Ascending aorta (tissue), 2 donors: ENCODE measurements at regions of chr1 and their contacts with region 1.

Region 1: GRCh38 chr1:184563308-184563707 is 176.5 kb downstream of the C1orf21 start:
- DNase-seq: no peak
- H3K4me3 ChIP-seq: no peak overlapping the region
- H3K27ac ChIP-seq: no peak overlapping the region
- H3K4me1 ChIP-seq: peaks cover 2 to 6% of the 10 kb centered on the region in 2 donors
- H3K27me3 ChIP-seq: no peaks in the 10 kb centered on the region
- CTCF ChIP-seq: peak; percentile 25 to 62 (median 33)

Region 2: DNA sequence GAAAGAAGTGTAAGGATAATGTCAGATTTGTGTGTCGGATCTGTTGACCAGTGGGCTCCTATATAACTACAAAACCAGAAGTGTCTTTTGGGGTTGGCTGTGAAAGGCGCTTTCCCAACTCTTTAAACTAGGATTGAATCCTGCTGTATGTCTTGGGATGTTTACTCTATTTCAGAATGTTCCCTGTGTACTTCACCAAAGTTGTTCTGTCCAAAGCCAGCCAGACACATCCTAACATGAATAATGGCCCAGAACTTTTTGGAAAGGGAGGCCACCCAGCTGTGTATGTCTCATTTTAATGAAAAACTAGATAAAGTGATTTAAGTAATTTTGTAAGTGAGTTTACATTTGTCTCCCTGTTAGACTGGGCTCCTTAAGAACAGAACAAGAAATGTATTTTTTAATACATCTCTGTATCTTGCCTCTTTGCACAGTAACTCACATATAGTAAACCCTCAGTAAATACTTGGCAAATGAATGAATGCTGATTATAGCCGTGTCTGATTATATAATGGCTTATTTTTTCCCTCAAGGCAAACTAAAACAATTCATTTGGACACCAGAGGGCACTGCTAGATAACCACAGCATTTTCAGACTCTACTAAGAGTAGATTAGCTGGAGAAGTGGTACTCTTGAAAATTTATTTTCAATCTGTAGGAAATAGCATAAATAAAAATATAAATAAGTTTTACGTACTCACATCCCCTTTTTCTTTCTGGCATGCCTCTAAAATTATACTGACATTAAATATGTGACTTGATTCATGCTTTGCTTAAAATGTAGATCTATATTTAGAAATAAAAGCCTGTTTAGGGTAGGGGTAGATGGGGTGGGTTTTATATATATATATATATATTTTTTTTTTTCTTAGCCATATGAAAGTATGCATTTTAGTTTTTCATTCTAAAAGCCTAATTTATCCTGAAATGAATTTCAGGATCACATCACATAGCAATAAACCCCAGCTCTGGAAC is 488.0 kb before region 1 on chr1:
- intact Hi-C with region 1: loop called (anchors 1 kb)
- DNase-seq: no peak
- H3K4me3 ChIP-seq: no peak overlapping the region
- H3K27ac ChIP-seq: no peak overlapping the region
- H3K4me1 ChIP-seq: peaks cover 0 to 3% of the 10 kb centered on the region in 2 donors
- H3K27me3 ChIP-seq: no peaks in the 10 kb centered on the region
- CTCF ChIP-seq: peak; percentile 47 to 72 (median 56)

Region 3: GRCh38 chr1:184242507-184242943 is 320.8 kb before region 1 on chr1:
- intact Hi-C with region 1: loop called (anchors 10 kb)
- DNase-seq: no peak
- H3K4me3 ChIP-seq: no peak overlapping the region
- H3K27ac ChIP-seq: no peak overlapping the region
- H3K4me1 ChIP-seq: no peaks in the 10 kb centered on the region
- H3K27me3 ChIP-seq: no peaks in the 10 kb centered on the region
- CTCF ChIP-seq: peak in 2 of 3 experiments; percentile 19 to 29

Region 4: GRCh38 chr1:184386312-184387068 is 176.8 kb before region 1 on chr1 and contains the start of gene C1orf21:
- intact Hi-C with region 1: loop called (anchors 5 kb)
- DNase-seq: peak; percentile 54 to 93
- H3K4me3 ChIP-seq: peak within 1 kb of the TSS; percentile 87 to 98
- H3K27ac ChIP-seq: peak within 1 kb of the TSS; percentile 73 to 75
- H3K4me1 ChIP-seq: peaks cover 0 to 5% of the 10 kb centered on the region in 2 donors
- H3K27me3 ChIP-seq: no peaks in the 10 kb centered on the region
- CTCF ChIP-seq: no peak
- total RNA-seq, gene C1orf21: 21.8 TPM

Region 5: GRCh38 chr1:184504040-184504954 is 59.0 kb before region 1 on chr1:
- intact Hi-C with region 1: no loop called
- DNase-seq: no peak
- H3K4me3 ChIP-seq: no peak overlapping the region
- H3K27ac ChIP-seq: no peak overlapping the region
- H3K4me1 ChIP-seq: peaks cover 0 to 12% of the 10 kb centered on the region in 2 donors
- H3K27me3 ChIP-seq: no peaks in the 10 kb centered on the region
- CTCF ChIP-seq: no peak

Region 6: DNA sequence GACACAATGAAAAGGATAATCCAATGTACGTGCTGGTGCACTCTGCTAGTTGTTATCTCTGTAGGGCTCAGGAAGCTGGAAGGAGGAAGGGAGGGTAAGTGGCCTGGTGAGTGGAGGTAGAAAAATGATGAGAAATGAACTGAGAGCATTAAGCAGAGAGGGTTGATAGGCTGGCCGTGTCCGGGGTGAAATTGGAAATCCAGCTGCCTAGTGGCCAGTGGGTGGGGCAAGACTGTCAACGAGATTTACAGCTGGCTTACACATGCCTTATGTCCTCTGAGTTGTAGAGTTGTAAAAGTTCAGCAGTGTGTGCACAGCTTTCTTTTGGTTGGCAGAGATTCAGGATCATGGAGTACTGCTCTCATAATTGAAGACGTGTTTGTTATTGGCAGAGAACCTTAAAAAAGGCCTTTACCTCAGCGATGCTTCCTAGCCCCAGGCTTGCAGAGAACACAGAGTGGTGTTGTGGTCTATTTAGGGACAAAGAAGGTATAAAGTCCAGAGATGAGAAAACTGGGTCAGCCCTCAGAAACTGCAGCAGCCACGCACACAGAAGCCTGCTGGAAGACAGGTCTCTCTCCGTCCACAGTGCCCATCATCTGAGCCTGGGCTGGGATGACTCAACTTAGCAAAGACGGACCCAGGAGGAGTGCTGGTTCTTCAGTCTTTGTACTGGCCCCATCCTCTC is 59.0 kb after region 1 on chr1:
- intact Hi-C with region 1: no loop called
- DNase-seq: peak in 1 of 2 donors; percentile 88
- H3K4me3 ChIP-seq: no peak overlapping the region
- H3K27ac ChIP-seq: peak overlapping the region; percentile 59 to 79
- H3K4me1 ChIP-seq: peaks cover 0 to 16% of the 10 kb centered on the region in 2 donors
- H3K27me3 ChIP-seq: no peaks in the 10 kb centered on the region
- CTCF ChIP-seq: no peak